ENCODE measurements at regions of chr4 and their contacts with region 1.

Region 1: GRCh38 chr4:110154582-110154981 is 43.8 kb downstream of the ELOVL6 start:
- DNase-seq: no peak
- CTCF ChIP-seq: no peak

Region 2: DNA sequence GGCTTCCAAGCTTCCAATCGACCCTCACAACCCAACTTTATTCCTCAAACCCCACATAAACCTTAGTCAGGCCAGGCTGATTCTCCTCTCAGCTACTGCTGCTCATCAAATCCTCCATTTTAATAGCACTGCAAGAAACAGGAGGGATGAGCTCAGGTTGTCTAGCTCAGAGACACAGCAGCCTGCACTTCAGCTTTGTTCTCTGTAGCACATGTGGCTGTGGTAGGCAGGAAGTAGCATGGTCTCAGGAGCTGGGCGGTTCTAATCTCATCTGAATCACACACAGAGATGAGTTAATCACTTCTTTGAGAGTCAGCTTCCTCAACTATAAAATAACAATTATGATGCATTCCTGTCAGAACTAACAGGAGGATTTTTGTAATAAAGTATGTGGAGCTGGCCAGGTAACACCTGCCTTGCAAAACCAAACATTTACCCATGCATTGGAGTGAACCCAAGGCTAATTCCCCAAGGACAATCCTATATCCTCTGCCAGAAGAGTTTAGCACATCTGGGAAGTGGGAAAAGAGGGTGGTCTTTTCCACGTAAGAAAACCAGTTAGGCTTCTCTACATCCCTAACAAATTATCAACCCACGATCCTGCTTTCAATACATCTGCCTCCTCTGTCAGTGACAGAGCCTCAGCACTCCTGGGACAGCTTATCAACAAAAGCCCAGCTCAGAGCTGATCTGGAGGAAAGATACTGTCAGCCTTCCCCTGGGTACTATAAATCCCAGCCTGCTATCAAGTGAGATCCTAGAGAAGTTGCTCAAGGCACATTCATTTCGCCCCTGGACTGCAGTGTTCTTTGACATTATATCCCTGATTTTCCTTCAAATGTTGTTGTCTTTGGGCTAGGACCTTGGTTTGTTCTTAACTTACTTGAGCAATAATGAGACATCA is 11.1 kb after region 1 on chr4:
- CTCF ChIA-PET with region 1: interaction called, 16 read pairs
- POLR2A ChIA-PET with region 1: no interaction called
- DNase-seq: no peak
- CTCF ChIP-seq: no peak

Region 3: DNA sequence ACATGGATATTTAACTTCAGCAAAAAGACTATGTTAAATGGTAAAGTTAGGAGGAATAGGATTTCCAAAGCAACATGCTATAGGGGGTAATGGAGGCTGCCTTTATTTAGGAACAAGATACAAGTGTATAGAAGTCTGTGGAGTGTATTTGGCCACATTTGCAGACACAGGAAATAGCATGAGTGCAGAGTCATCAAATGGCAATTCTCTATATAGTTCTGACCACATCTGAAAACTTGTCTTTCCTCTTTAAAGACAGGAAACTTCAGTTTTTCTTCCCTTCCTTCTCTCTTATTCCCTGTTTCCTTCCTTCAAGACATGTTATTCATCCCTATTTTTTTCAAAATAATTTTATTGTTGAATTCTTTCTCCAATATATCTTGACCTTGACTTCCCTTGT is 587.6 kb after region 1 on chr4:
- CTCF ChIA-PET with region 1: no interaction called
- POLR2A ChIA-PET with region 1: no interaction called
- DNase-seq: no peak
- CTCF ChIP-seq: no peak

Measured in GM10248 (cell line).